AG04449 (cell line): ENCODE measurements at regions of chr19 and their contacts with region 1.

Region 1: GRCh38 chr19:44689056-44689895 is 9.7 kb upstream of the CEACAM16 start:
- DNase-seq: no peak
- H3K4me3 ChIP-seq: no peak overlapping the region
- CTCF ChIP-seq: peak; percentile 96

Region 2: GRCh38 chr19:43774103-43774939 is 915.0 kb before region 1 on chr19:
- CTCF ChIA-PET with region 1: no interaction called
- POLR2A ChIA-PET with region 1: no interaction called
- DNase-seq: no peak
- H3K4me3 ChIP-seq: peak overlapping the region; percentile 32
- CTCF ChIP-seq: peak; percentile 61

Region 3: DNA sequence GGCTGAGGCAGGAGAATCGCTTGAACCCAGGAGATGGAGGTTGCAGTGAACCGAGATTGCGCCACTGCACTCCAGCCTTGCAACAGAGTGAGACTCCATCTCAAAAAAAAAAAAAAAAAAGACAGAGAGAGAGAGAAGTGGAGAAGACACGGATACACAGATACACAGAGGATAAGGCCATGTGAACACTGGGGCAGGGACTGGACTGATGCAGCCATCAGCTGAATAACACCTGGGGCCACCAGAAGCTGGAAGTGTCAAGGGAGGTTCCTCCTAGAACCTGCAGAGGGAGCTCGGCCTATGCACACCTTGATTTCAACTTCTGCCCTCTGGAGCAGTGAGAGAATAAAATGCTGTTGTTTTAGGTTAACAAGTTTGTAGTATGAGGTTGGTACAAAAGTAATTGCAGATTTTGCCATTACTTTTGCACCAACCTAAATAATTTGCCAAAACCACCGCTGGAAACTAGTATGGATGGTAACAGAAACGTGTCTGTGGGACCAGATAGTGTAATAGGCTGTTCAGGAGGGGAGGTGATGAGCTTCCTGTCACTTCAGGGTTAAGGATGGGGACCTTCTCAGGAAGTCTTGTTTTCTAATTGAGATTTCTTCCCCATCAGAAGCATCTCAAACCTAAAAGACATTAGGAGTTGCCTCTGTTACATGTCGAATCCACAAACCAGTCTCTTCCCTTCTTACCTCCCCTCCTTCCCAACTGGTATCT is 112.3 kb before region 1 on chr19:
- CTCF ChIA-PET with region 1: interaction called, 16 read pairs
- POLR2A ChIA-PET with region 1: no interaction called
- DNase-seq: no peak
- H3K4me3 ChIP-seq: no peak overlapping the region
- CTCF ChIP-seq: peak; percentile 68

Region 4: GRCh38 chr19:44677019-44677821 is 12.1 kb before region 1 on chr19:
- CTCF ChIA-PET with region 1: interaction called, 43 read pairs
- POLR2A ChIA-PET with region 1: no interaction called
- DNase-seq: peak; percentile 42
- H3K4me3 ChIP-seq: no peak overlapping the region
- CTCF ChIP-seq: no peak

Region 5: GRCh38 chr19:44718441-44719261 is 29.4 kb after region 1 on chr19:
- CTCF ChIA-PET with region 1: interaction called, 81 read pairs
- POLR2A ChIA-PET with region 1: no interaction called
- DNase-seq: no peak
- H3K4me3 ChIP-seq: no peak overlapping the region
- CTCF ChIP-seq: no peak

Region 6: DNA sequence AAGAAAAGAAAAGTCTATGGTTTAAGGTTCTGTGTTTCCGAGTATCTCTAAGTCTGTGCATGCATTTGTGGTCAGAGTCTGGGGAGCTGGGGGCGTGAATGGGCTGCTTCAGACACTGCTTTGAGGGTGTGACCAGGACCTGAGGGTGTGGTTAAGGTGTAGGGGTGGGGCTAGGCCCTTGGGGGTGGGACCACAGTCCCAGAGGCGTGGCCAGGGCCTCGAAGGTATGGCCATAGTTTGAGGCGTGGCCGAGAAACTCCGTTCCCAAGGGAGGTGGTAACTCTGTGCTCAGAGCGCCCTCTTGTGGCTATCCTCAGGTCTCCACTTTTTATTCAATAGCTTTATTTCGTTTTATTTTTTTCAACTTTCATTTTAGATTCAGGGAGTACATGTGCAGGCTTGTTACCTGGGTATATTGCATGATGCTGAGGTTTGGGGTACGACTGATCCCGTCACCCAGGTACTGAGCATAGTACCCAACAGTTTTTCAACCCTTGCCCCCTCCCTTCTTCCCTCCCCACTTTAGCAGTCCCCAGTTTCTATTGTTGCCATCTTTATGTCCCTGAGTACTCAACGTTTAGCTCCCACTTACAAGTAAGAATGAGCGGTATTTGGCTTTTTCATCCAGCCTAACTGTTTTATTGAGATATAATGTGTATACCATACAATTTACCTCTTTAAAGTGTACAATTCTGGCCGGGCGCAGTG is 81.4 kb after region 1 on chr19:
- CTCF ChIA-PET with region 1: interaction called, 128 read pairs
- POLR2A ChIA-PET with region 1: no interaction called
- DNase-seq: no peak
- H3K4me3 ChIP-seq: no peak overlapping the region
- CTCF ChIP-seq: peak; percentile 67

Region 7: DNA sequence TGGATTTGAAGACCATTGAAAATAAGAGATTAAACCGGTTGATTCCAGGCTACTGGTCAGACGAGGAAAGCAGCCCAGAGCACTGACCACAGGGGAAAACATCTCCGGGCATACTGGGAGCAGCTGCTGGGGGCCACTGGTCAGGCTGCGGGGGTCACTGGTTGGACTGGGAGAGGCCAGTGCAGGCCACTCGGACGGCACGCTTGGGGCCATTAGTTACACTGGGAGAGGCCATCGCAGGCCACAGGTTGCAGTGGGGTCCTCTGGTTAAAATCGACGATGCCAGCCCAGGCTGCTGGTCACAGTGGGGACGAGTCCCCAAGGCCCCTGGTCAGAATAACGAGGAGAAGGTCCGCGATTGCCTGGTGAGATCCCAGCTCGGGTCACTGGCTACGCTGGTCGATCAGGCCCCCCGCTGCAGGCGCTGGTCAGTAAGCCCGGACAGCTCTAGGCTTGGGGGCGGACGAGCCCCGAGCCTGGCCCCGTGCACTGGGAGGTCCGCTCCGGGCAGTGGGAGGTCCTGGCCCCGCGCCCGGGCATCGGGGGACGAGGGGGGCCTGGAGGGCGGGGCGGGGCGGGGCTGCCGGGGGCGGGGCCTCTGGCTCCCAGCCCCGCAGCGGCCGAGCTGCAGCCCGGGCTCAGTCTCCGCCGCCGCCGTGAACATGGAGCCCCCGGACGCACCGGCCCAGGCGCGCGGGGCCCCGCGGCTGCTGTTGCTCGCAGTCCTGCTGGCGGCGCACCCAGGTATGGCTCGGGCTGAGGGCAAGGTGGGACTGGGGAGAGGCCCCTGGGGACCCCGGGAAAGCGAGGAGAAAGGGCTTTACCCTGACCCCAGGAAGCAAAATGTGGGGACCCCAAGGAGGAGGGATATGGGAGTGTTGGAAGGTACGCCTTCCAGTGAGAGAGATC is 119.4 kb after region 1 on chr19 and contains the start of gene BCAM:
- CTCF ChIA-PET with region 1: interaction called, 13 read pairs
- POLR2A ChIA-PET with region 1: no interaction called
- DNase-seq: no peak
- H3K4me3 ChIP-seq: peak within 1 kb of the TSS; percentile 64
- CTCF ChIP-seq: no peak